Activated B cell treated with CpG ODN at 0.5 μM for 24 hours (primary cell): ENCODE measurements at regions of chr1 and their contacts with region 1.

Region 1: GRCh38 chr1:107963601-107964335 is 1.2 kb downstream of the VAV3 start:
- DNase-seq: peak; percentile 70
- ATAC-seq: peak; percentile 62
- H3K4me3 Mint-ChIP-seq: peak overlapping the region; percentile 93
- H3K27ac Mint-ChIP-seq: peak overlapping the region; percentile 99
- H3K4me1 Mint-ChIP-seq: peaks cover 61% of the 10 kb centered on the region
- H3K27me3 Mint-ChIP-seq: no peaks in the 10 kb centered on the region
- CTCF ChIP-seq: no peak

Region 2: DNA sequence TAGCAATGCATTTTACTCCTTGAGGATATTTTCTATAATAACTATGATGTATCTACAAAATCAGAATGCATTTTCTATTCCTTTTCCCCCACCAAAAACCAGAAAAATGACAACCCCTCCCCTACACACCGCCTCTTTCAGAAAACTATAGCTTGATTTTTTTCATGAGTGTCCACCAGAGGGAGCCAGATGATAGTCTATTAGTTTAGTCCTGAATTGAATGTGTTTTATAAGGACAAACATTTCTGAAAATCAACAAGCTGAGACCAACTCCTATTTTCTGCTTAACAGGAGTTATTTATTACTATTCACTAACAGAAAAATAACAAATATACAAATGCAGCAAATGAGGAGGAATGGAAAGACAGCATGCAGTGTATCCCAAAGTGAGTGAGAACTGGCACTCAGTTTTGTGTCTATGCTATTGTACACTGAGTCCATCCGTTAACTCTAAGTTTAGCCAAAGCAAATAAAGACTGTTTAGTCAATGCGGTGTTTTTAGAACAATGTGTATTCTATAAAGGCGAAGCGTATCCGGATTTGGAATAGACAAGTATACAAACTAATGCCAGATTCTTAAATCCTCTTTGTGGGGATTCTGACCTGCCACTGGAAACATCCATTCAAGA is 181.4 kb before region 1 on chr1:
- CTCF ChIA-PET with region 1: interaction called, 77 read pairs
- POLR2A ChIA-PET with region 1: interaction called, 19 read pairs
- intact Hi-C with region 1: loop called (anchors 1 kb)
- DNase-seq: no peak
- ATAC-seq: peak; percentile 19
- H3K4me3 Mint-ChIP-seq: no peak overlapping the region
- H3K27ac Mint-ChIP-seq: no peak overlapping the region
- H3K4me1 Mint-ChIP-seq: peaks cover 54% of the 10 kb centered on the region
- H3K27me3 Mint-ChIP-seq: no peaks in the 10 kb centered on the region
- CTCF ChIP-seq: peak; percentile 83

Region 3: GRCh38 chr1:107877092-107877491 is 86.7 kb before region 1 on chr1:
- CTCF ChIA-PET with region 1: interaction called, 3 read pairs
- POLR2A ChIA-PET with region 1: interaction called, 9 read pairs
- intact Hi-C with region 1: loop called (anchors 2 kb)
- DNase-seq: no peak
- ATAC-seq: peak; percentile 70
- H3K4me3 Mint-ChIP-seq: peak overlapping the region; percentile 62
- H3K27ac Mint-ChIP-seq: peak overlapping the region; percentile 75
- H3K4me1 Mint-ChIP-seq: peaks cover 87% of the 10 kb centered on the region
- H3K27me3 Mint-ChIP-seq: no peaks in the 10 kb centered on the region
- CTCF ChIP-seq: no peak

Region 4: DNA sequence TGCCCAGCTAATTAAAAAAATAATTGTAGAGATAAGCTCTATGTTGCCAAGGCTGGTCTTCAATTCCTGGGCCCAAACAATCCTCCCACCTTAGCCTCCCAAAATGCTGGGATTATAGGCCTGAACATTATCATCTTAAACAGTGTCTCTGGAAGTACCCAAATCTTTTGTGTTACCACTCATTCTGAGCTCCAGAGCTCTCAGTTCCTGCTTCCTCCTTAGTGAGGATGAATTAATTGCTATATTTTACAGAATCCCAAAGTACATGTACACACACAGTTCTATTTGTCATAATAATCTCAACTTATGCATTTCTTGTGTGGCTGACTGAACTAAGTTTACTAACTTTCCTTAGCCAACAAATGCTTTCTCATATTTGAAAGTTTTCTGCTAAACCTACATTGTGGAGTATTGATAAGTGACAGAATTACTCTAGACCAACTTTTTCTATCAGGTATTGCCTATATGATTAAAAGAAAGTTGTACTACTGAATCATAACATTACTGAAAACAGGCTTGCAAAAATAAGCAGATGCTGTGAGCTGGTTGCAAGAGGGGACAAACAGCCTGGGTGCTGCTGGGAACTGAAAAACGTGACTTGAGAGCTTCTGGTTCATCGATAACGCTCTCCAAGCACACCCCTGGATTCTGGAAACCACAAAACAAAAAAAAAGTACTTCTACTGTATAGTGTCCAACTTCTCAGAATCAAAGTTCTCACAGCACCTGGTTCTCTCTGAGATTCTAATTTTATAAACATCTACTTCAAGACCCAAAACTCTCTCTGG is 14.1 kb before region 1 on chr1:
- CTCF ChIA-PET with region 1: interaction called, 9 read pairs
- POLR2A ChIA-PET with region 1: interaction called, 21 read pairs
- intact Hi-C with region 1: no loop called
- DNase-seq: no peak
- ATAC-seq: peak; percentile 50
- H3K4me3 Mint-ChIP-seq: peak overlapping the region; percentile 19
- H3K27ac Mint-ChIP-seq: peak overlapping the region; percentile 11
- H3K4me1 Mint-ChIP-seq: peaks cover 75% of the 10 kb centered on the region
- H3K27me3 Mint-ChIP-seq: no peaks in the 10 kb centered on the region
- CTCF ChIP-seq: no peak

Region 5: DNA sequence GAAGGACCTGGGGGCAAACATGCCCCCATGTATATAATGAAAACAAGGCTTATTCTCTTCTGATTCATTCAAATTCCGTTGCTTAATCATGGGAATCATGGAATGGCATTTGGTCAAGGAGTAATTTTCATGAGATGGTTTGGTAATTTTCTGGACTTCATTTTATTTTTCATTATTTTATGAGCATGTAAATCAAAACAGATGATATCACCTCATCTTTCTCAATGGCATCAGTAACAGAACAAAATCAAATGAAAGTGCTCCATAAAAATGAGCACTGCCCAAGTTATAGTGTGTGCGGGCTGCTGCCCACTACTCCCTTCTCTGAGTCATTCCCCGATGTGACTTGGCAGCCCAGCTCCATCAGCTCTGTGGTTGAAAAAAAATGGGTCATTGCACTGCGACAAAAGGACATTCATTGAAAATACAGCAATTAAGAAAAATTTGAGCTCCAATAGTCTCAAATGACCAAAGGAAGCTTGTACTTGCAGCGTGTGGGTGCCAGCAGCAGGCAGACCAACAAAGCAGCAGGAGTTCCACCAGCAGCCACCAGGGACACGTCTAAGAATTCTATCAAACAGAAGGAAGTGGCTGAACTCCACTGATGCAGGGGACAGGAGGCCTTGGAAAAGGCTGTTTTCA is 85.5 kb after region 1 on chr1:
- CTCF ChIA-PET with region 1: no interaction called
- POLR2A ChIA-PET with region 1: interaction called, 4 read pairs
- intact Hi-C with region 1: loop called (anchors 2 kb)
- DNase-seq: no peak
- ATAC-seq: peak; percentile 71
- H3K4me3 Mint-ChIP-seq: peak overlapping the region; percentile 9
- H3K27ac Mint-ChIP-seq: no peak overlapping the region
- H3K4me1 Mint-ChIP-seq: peaks cover 26% of the 10 kb centered on the region
- H3K27me3 Mint-ChIP-seq: no peaks in the 10 kb centered on the region
- CTCF ChIP-seq: peak; percentile 17

Region 6: GRCh38 chr1:108199781-108200570 is 236.2 kb after region 1 on chr1 and contains the start of gene SLC25A24:
- CTCF ChIA-PET with region 1: no interaction called
- POLR2A ChIA-PET with region 1: no interaction called
- intact Hi-C with region 1: loop called (anchors 1 kb)
- DNase-seq: peak; percentile 85
- ATAC-seq: peak; percentile 94
- H3K4me3 Mint-ChIP-seq: peak within 1 kb of the TSS; percentile 93
- H3K27ac Mint-ChIP-seq: peak within 1 kb of the TSS; percentile 86
- H3K4me1 Mint-ChIP-seq: peaks cover 29% of the 10 kb centered on the region
- H3K27me3 Mint-ChIP-seq: no peaks in the 10 kb centered on the region
- CTCF ChIP-seq: no peak
- total RNA-seq, gene SLC25A24: 20.2 and 22.1 TPM in 2 replicates